Panc1 (cell line): ENCODE measurements at regions of chr14 and their contacts with region 1.

Region 1: DNA sequence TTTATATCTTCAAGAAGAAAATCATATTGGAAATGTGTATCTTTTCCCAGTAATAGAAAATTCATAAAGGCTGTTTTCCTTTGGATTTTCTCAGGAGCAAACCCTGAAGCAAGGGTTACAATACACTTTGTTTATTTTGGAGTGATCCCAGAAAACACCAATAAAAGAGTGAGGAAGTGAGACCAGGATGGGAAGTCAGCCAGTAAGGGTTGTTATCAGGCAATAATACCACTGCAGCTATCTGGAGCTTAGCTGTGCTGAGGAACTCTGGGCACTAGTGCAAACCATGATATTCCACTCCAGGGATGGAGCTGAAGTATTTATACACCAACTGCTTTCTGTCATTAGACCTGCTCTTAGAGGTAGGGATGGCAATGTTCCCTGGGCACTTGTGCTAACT is 1002.3 kb downstream of the FLRT2 start:
- DNase-seq: no peak
- ATAC-seq: 0 out of 2 replicates have a peak, but pooled peaks have one; percentile 21
- H3K4me3 ChIP-seq: no peak overlapping the region
- H3K27ac ChIP-seq: no peak overlapping the region
- H3K4me1 ChIP-seq: no peaks in the 10 kb centered on the region
- H3K27me3 ChIP-seq: no peaks in the 10 kb centered on the region
- CTCF ChIP-seq: no peak

Region 2: GRCh38 chr14:86391085-86391484 is 141.1 kb before region 1 on chr14:
- CTCF ChIA-PET with region 1: no interaction called
- POLR2A ChIA-PET with region 1: interaction called, 18 read pairs
- in situ Hi-C with region 1: no loop called
- intact Hi-C with region 1: no loop called
- DNase-seq: no peak
- ATAC-seq: no peak
- H3K4me3 ChIP-seq: no peak overlapping the region
- H3K27ac ChIP-seq: no peak overlapping the region
- H3K4me1 ChIP-seq: no peaks in the 10 kb centered on the region
- H3K27me3 ChIP-seq: no peaks in the 10 kb centered on the region
- CTCF ChIP-seq: no peak